Cardiac septum (tissue), 1 donor: ENCODE measurements at regions of chr5 and their contacts with region 1.

Region 1: DNA sequence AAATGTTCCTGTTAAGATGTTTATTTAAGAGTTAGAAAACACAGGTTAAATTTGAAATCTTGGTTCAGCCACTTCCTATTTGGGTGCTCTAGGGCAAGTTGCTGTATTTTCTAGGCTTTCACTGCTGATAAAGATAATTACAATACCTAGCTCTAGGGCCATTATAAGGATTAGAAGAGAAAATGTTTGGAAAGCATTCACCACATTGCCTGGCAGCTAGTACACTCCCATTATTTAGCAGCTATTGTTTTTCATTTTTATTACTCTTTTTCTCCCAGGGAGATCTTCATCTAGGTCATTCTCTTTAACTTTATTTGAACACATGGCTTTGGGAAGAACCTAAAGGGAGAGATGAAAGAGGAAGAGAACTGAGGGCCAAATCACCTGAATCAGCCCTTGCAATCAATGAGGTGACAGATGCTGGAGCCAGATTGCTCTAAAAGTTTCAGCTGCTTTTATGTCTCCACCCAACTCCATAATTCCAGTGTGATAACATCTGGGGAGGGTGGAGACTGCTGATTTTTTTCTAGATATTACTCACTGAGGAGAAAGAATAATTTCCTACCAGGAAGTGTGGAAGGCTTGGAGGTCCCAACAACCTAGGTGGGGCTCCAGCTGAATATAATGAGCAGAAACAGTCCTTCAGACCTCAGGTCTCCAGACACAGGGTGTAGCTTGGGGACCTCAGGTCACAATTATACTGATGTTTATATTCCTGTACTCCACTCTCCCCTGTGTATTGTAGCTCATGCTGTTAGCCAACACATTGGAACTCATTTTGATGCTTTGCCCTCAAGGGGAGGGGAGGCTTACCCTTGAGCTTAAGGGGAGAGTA is 640.0 kb downstream of the RAB3C start:
- DNase-seq: no peak

Region 2: DNA sequence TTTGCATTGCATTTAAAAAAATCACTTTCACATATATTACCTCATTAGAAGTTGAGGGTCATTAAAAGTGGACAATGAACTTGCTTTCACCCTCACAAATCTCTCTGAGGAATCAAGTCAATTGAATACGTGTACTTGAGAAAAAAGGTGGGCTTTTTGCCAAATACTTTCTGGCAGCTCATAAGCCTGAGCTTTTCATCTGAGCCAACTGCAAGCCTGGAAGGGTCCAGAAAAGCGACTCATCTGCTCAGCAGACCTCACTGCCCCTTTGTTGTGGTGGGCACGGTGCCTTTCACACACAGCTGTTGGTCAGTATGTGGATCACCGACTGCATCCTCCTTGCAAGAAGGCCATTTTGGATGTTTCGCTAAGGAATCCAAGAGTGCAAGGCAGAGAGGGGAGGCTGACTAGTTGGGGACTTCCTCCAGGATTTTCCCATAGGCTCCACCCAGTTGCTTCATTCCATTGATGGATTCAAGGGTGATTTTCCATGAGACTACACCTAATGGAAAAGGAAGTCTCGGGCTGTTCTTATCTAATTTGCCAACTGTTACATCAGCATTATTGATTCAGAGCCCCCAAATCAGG is 105.9 kb after region 1 on chr5:
- intact Hi-C with region 1: loop called (anchors 2 kb)
- DNase-seq: no peak